ENCODE measurements at regions of chr7 and their contacts with region 1.

Region 1: DNA sequence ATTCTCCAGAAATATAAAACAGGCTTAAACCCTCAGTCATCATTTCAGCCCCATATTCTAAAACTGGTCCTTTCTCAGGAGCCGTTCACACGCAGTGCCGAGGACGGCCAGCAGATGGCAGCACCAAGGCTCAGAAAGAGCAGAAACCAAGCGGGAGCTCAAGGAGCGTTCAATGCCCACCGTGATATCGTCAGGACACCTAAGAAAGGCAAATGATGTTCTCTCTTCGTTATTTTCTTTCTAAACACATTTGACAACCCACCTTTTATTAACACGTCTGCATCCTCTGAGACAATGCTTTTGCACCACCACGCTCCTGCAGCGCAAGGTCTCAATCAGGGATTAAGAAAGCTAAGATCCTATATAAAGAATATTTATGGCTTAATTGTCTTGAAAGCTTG is 45.7 kb upstream of the RBM33 start:
- DNase-seq: peak; percentile 73
- H3K4me3 ChIP-seq: no peak overlapping the region
- H3K27ac ChIP-seq: no peak overlapping the region
- H3K4me1 ChIP-seq: no peaks in the 10 kb centered on the region
- H3K27me3 ChIP-seq: peaks cover 3 to 14% of the 10 kb centered on the region in 2 experiments
- CTCF ChIP-seq: peak; percentile 93 to 98
- POLR2A ChIP-seq: no peak

Region 2: GRCh38 chr7:154950960-154951359 is 647.9 kb before region 1 on chr7:
- CTCF ChIA-PET with region 1: no interaction called
- POLR2A ChIA-PET with region 1: no interaction called
- dilution Hi-C with region 1: no loop called
- intact Hi-C with region 1: no loop called
- DNase-seq: no peak
- H3K4me3 ChIP-seq: no peak overlapping the region
- H3K27ac ChIP-seq: no peak overlapping the region
- H3K4me1 ChIP-seq: no peaks in the 10 kb centered on the region
- H3K27me3 ChIP-seq: no peaks in the 10 kb centered on the region
- CTCF ChIP-seq: no peak
- POLR2A ChIP-seq: no peak

Region 3: GRCh38 chr7:155141562-155141961 is 457.2 kb before region 1 on chr7:
- CTCF ChIA-PET with region 1: no interaction called
- POLR2A ChIA-PET with region 1: no interaction called
- dilution Hi-C with region 1: no loop called
- intact Hi-C with region 1: no loop called
- DNase-seq: no peak
- H3K4me3 ChIP-seq: no peak overlapping the region
- H3K27ac ChIP-seq: no peak overlapping the region
- H3K4me1 ChIP-seq: no peaks in the 10 kb centered on the region
- H3K27me3 ChIP-seq: no peaks in the 10 kb centered on the region
- CTCF ChIP-seq: no peak
- POLR2A ChIP-seq: no peak

Region 4: DNA sequence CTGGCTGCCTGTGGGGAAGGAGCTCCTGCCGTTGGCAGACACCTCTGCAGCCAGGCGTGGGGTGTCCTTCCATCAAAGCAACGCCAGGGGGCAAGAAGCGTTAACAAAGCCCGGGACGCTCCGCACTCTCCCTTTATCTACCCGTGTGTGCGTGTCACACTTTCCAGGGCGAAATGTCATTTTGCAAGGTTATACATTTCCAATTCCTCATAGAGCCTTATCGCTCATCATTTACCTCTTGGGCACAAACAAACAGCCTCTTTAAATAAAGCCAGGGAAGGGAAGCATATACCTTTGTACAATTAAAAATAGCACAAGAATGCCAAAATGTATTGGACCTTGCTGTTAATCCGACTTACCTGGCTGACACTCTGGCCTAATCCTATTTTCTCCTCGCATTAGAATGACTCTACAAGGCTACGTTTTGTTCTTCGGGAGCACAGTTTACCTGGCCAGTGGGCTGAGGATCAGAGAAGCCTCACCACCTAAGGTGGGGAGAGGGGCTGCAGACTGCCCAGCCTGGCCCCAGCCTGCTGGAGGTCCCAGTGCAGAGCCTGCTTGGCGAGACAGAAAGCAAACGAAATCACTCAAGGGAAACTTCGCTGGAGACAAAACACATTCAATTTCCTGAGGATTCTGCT is 218.5 kb before region 1 on chr7:
- CTCF ChIA-PET with region 1: interaction called, 16 read pairs
- POLR2A ChIA-PET with region 1: no interaction called
- dilution Hi-C with region 1: no loop called
- intact Hi-C with region 1: no loop called
- DNase-seq: peak; percentile 62
- H3K4me3 ChIP-seq: no peak overlapping the region
- H3K27ac ChIP-seq: no peak overlapping the region
- H3K4me1 ChIP-seq: no peaks in the 10 kb centered on the region
- H3K27me3 ChIP-seq: peaks cover 77 to 85% of the 10 kb centered on the region in 2 experiments
- CTCF ChIP-seq: peak; percentile 66 to 83
- POLR2A ChIP-seq: no peak

Region 5: GRCh38 chr7:155618708-155619633 is 20.2 kb after region 1 on chr7:
- CTCF ChIA-PET with region 1: interaction called, 44 read pairs
- POLR2A ChIA-PET with region 1: no interaction called
- dilution Hi-C with region 1: no loop called
- intact Hi-C with region 1: no loop called
- DNase-seq: no peak
- H3K4me3 ChIP-seq: no peak overlapping the region
- H3K27ac ChIP-seq: no peak overlapping the region
- H3K4me1 ChIP-seq: no peaks in the 10 kb centered on the region
- H3K27me3 ChIP-seq: peaks cover 0 to 2% of the 10 kb centered on the region in 2 experiments
- CTCF ChIP-seq: no peak
- POLR2A ChIP-seq: no peak

Region 6: DNA sequence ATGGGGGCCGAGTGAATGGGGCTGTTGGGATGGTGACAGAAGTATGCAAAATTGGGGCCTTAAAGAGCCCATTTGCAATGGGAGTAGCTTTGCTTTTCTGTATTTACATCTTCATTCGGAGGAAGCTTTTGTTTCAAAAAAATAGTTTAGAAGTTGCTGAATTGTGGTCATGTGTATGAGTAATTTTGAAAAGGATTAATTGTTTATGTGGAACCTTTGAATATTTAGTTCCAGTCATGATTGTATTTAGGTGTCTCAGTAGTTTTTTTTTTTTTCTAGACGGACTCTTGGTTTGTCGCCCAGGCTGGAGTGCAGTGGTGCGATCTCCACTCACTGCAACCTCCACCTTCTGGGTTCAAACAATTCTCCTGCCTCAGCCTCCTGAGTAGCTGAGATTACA is 82.9 kb after region 1 on chr7:
- CTCF ChIA-PET with region 1: interaction called, 10 read pairs
- POLR2A ChIA-PET with region 1: no interaction called
- dilution Hi-C with region 1: no loop called
- intact Hi-C with region 1: no loop called
- DNase-seq: no peak
- H3K4me3 ChIP-seq: no peak overlapping the region
- H3K27ac ChIP-seq: no peak overlapping the region
- H3K4me1 ChIP-seq: no peaks in the 10 kb centered on the region
- H3K27me3 ChIP-seq: no peaks in the 10 kb centered on the region
- CTCF ChIP-seq: no peak
- POLR2A ChIP-seq: no peak

Region 7: DNA sequence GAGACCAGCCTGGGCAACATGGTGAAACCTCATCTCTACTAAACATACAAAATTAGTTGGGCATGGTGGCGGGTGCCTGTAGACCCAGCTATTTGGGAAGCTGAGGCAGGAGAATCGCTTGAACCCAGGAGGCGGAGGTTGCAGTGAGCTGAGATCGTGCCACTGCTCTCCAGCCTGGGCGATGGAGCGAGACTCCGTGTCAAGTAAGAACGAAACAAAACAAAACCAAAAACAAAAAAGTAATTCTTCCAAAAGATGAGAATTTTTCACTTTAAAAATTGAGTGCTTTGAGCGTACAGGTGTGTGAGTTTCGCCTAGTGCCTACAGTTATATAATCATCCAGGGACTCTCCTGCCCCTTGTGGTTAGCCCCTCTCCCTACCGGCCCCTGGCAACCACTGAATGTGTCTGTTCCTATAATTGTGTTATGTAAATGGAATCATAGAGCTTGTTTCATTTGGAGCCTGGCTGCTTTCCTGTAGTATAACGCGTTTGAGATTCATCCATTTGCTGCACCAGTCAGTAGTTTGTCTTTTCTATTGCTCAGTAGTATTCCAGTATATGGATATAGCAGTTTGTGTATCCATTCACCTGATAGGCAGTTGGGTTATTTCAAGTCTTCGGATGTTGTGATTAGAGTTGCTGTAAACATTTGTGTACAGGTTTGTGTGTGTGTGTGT is 125.7 kb after region 1 on chr7:
- CTCF ChIA-PET with region 1: interaction called, 189 read pairs
- POLR2A ChIA-PET with region 1: no interaction called
- dilution Hi-C with region 1: no loop called
- intact Hi-C with region 1: no loop called
- DNase-seq: no peak
- H3K4me3 ChIP-seq: no peak overlapping the region
- H3K27ac ChIP-seq: no peak overlapping the region
- H3K4me1 ChIP-seq: no peaks in the 10 kb centered on the region
- H3K27me3 ChIP-seq: no peaks in the 10 kb centered on the region
- CTCF ChIP-seq: peak; percentile 8 to 11
- POLR2A ChIP-seq: no peak

Region 8: DNA sequence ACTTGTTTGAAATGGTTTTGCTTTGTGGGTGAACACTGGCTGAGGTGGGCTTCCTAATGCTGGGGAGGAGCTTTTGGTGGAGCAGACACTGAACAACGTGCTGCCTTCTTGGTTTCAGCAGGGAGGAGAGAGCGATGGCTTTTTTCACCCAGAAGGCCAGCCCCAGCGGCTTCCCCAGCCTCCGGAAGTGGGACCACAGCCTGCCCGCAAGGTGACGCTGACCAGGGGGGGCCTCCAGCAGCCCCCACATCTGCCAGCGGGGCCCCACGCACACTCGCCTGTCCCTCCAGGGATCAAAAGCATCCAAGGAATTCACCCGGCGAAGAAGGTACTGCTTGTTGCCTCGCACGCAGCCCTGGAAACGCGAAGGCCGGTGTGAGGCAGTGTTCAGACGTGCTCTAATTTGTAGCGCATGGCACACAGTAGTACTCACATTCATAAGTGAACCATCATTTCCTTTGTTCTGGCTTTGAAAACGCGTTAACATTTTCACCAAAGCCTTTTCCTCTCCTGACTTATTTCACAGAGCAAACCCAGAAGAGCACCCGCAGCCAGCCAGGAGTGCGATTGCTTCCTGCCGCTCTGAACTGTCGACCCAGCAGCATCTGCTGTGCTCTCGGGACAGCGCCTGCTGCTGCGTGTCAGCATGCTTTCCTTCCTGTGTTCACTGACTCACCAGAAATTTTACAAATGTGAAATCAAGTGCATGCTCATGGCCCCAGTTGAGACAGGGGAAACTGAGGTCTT is 165.1 kb after region 1 on chr7:
- CTCF ChIA-PET with region 1: interaction called, 323 read pairs
- POLR2A ChIA-PET with region 1: no interaction called
- dilution Hi-C with region 1: no loop called
- intact Hi-C with region 1: loop called (anchors 1 kb)
- DNase-seq: peak; percentile 88
- H3K4me3 ChIP-seq: no peak overlapping the region
- H3K27ac ChIP-seq: peak overlapping the region; percentile 69
- H3K4me1 ChIP-seq: peaks cover 16% of the 10 kb centered on the region
- H3K27me3 ChIP-seq: no peaks in the 10 kb centered on the region
- CTCF ChIP-seq: no peak
- POLR2A ChIP-seq: no peak